ENCODE measurements at regions of chrX and their contacts with region 1.

Region 1: GRCh38 chrX:154918060-154918483 is 31.9 kb downstream of the F8A1 start:
- DNase-seq: peak in 9 of 14 experiments; percentile 0 to 62 (median 25)
- ATAC-seq: peak; percentile 58
- H3K4me3 ChIP-seq: no peak overlapping the region
- H3K4me3 Mint-ChIP-seq: peak overlapping the region; percentile 72
- H3K27ac ChIP-seq: no peak overlapping the region
- H3K27ac Mint-ChIP-seq: no peak overlapping the region
- H3K4me1 ChIP-seq: no peaks in the 10 kb centered on the region
- H3K4me1 Mint-ChIP-seq: no peaks in the 10 kb centered on the region
- H3K27me3 ChIP-seq: no peaks in the 10 kb centered on the region
- H3K27me3 Mint-ChIP-seq: peaks cover 5% of the 10 kb centered on the region
- CTCF ChIP-seq: peak; percentile 64

Region 2: GRCh38 chrX:154967603-154968002 is 49.5 kb after region 1 on chrX:
- CTCF ChIA-PET with region 1: no interaction called
- POLR2A ChIA-PET with region 1: no interaction called
- intact Hi-C with region 1: no loop called
- DNase-seq: no peak
- ATAC-seq: no peak
- H3K4me3 ChIP-seq: no peak overlapping the region
- H3K4me3 Mint-ChIP-seq: no peak overlapping the region
- H3K27ac ChIP-seq: no peak overlapping the region
- H3K27ac Mint-ChIP-seq: no peak overlapping the region
- H3K4me1 ChIP-seq: no peaks in the 10 kb centered on the region
- H3K4me1 Mint-ChIP-seq: no peaks in the 10 kb centered on the region
- H3K27me3 ChIP-seq: no peaks in the 10 kb centered on the region
- H3K27me3 Mint-ChIP-seq: no peaks in the 10 kb centered on the region
- CTCF ChIP-seq: no peak

Region 3: DNA sequence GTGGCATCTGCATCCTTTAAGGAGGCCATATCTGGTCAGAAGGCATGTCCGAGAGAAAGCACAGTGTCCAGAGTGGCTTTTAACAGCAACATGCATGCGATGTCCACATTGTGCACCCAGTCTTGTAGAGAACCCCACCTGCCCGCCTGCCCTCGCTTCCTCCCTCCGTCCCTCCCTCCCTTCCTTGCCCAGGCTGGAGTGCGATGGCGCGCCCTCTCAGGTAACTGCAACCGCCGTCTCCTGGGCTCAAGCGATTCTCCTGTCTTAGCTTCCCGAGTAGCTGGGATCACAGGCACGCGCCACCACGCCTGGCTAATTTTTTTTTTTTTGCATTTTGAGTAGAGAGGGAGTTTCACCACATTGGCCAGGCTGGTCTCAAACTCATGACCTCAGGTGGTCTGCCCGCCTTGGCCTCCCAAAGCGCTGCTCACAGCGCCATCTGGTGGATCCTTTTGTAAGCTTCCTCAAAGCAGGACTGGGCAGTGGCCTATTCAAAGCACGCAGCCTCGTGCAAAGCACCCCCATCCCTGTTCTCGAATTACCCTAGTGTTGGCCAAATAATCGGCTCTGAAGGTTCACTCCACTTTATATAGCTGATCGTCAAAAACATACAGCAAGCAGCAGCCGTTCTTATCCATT is 168.2 kb after region 1 on chrX:
- CTCF ChIA-PET with region 1: interaction called, 4 read pairs
- POLR2A ChIA-PET with region 1: no interaction called
- intact Hi-C with region 1: loop called in 1 of 2 experiments (anchors 2 kb)
- DNase-seq: peak in 13 of 14 experiments; percentile 5 to 67 (median 24)
- ATAC-seq: peak; percentile 34
- H3K4me3 ChIP-seq: no peak overlapping the region
- H3K4me3 Mint-ChIP-seq: no peak overlapping the region
- H3K27ac ChIP-seq: no peak overlapping the region
- H3K27ac Mint-ChIP-seq: no peak overlapping the region
- H3K4me1 ChIP-seq: no peaks in the 10 kb centered on the region
- H3K4me1 Mint-ChIP-seq: no peaks in the 10 kb centered on the region
- H3K27me3 ChIP-seq: no peaks in the 10 kb centered on the region
- H3K27me3 Mint-ChIP-seq: no peaks in the 10 kb centered on the region
- CTCF ChIP-seq: peak; percentile 51

Region 4: DNA sequence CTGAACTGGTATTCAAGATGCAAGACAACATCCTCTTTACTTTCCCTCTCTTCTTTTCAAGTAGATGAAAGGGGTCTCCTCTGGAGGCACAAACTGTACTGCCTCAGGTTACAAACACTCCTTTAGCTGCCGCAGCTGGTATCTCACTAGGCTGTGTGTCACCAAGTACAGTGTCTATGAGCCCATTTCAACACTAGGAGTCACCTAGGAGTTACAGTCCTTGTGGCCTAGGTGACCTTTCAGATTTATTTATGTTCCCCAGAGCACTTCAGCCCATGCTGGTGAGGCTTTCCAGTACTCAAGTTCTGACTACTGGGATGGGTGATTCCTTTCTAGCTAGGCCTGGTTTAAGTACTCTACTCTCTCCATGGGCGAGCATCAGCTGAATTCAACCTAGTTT is 727.1 kb after region 1 on chrX:
- CTCF ChIA-PET with region 1: no interaction called
- POLR2A ChIA-PET with region 1: no interaction called
- intact Hi-C with region 1: loop called (anchors 5 kb)
- DNase-seq: no peak
- ATAC-seq: no peak
- H3K4me3 ChIP-seq: no peak overlapping the region
- H3K4me3 Mint-ChIP-seq: no peak overlapping the region
- H3K27ac ChIP-seq: no peak overlapping the region
- H3K27ac Mint-ChIP-seq: no peak overlapping the region
- H3K4me1 ChIP-seq: no peaks in the 10 kb centered on the region
- H3K4me1 Mint-ChIP-seq: peaks cover 5% of the 10 kb centered on the region
- H3K27me3 ChIP-seq: no peaks in the 10 kb centered on the region
- H3K27me3 Mint-ChIP-seq: no peaks in the 10 kb centered on the region
- CTCF ChIP-seq: no peak

Region 5: GRCh38 chrX:155819966-155820491 is 902.0 kb after region 1 on chrX:
- CTCF ChIA-PET with region 1: no interaction called
- POLR2A ChIA-PET with region 1: no interaction called
- intact Hi-C with region 1: loop called in 1 of 2 experiments (anchors 2 kb)
- DNase-seq: peak; percentile 6 to 69 (median 23)
- ATAC-seq: peak; percentile 41
- H3K4me3 ChIP-seq: no peak overlapping the region
- H3K4me3 Mint-ChIP-seq: no peak overlapping the region
- H3K27ac ChIP-seq: no peak overlapping the region
- H3K27ac Mint-ChIP-seq: no peak overlapping the region
- H3K4me1 ChIP-seq: no peaks in the 10 kb centered on the region
- H3K4me1 Mint-ChIP-seq: no peaks in the 10 kb centered on the region
- H3K27me3 ChIP-seq: no peaks in the 10 kb centered on the region
- H3K27me3 Mint-ChIP-seq: peaks cover 29% of the 10 kb centered on the region
- CTCF ChIP-seq: peak; percentile 58

Measured in CD4-positive, alpha-beta T cell (primary cell).